ENCODE measurements at regions of chr13 and their contacts with region 1.

Region 1: GRCh38 chr13:102571075-102571474 is 25.7 kb upstream of the TPP2 start:
- DNase-seq: no peak
- ATAC-seq: no peak
- H3K4me3 Mint-ChIP-seq: no peak overlapping the region
- H3K27ac Mint-ChIP-seq: no peak overlapping the region
- H3K4me1 Mint-ChIP-seq: no peaks in the 10 kb centered on the region
- H3K27me3 Mint-ChIP-seq: peaks cover 25% of the 10 kb centered on the region
- CTCF ChIP-seq: no peak

Region 2: GRCh38 chr13:101499406-101499805 is 1071.7 kb before region 1 on chr13:
- CTCF ChIA-PET with region 1: no interaction called
- POLR2A ChIA-PET with region 1: no interaction called
- intact Hi-C with region 1: no loop called
- DNase-seq: no peak
- ATAC-seq: no peak
- H3K4me3 Mint-ChIP-seq: no peak overlapping the region
- H3K27ac Mint-ChIP-seq: no peak overlapping the region
- H3K4me1 Mint-ChIP-seq: no peaks in the 10 kb centered on the region
- H3K27me3 Mint-ChIP-seq: peaks cover 1% of the 10 kb centered on the region
- CTCF ChIP-seq: no peak

Region 3: GRCh38 chr13:102538938-102539337 is 32.1 kb before region 1 on chr13:
- CTCF ChIA-PET with region 1: no interaction called
- POLR2A ChIA-PET with region 1: no interaction called
- intact Hi-C with region 1: loop called (anchors 1 kb)
- DNase-seq: no peak
- ATAC-seq: no peak
- H3K4me3 Mint-ChIP-seq: no peak overlapping the region
- H3K27ac Mint-ChIP-seq: no peak overlapping the region
- H3K4me1 Mint-ChIP-seq: no peaks in the 10 kb centered on the region
- H3K27me3 Mint-ChIP-seq: peaks cover 6% of the 10 kb centered on the region
- CTCF ChIP-seq: no peak